Right lobe of liver (tissue), 6 donors: ENCODE measurements at regions of chr17 and their contacts with region 1.

Region 1: GRCh38 chr17:39147221-39148185 is 3.9 kb downstream of the PLXDC1 start:
- DNase-seq: no peak
- ATAC-seq: no peak
- H3K4me3 ChIP-seq: no peak overlapping the region
- H3K27ac ChIP-seq: no peak overlapping the region
- H3K4me1 ChIP-seq: peaks cover 0 to 6% (median 0%) of the 10 kb centered on the region in 4 donors
- H3K27me3 ChIP-seq: peaks cover 0 to 3% of the 10 kb centered on the region in 2 donors
- CTCF ChIP-seq: no peak
- POLR2A ChIP-seq: no peak

Region 2: GRCh38 chr17:39000021-39000601 is 147.4 kb before region 1 on chr17:
- intact Hi-C with region 1: no loop called
- DNase-seq: no peak
- ATAC-seq: no peak
- H3K4me3 ChIP-seq: no peak overlapping the region
- H3K27ac ChIP-seq: peak overlapping the region in 1 of 3 donors; percentile 26
- H3K4me1 ChIP-seq: no peaks in the 10 kb centered on the region
- H3K27me3 ChIP-seq: no peaks in the 10 kb centered on the region
- CTCF ChIP-seq: no peak
- POLR2A ChIP-seq: no peak

Region 3: GRCh38 chr17:39073916-39074315 is 73.6 kb before region 1 on chr17:
- intact Hi-C with region 1: loop called in 1 of 2 experiments (anchors 5 kb)
- DNase-seq: no peak
- ATAC-seq: no peak
- H3K4me3 ChIP-seq: no peak overlapping the region
- H3K27ac ChIP-seq: no peak overlapping the region
- H3K4me1 ChIP-seq: no peaks in the 10 kb centered on the region
- H3K27me3 ChIP-seq: no peaks in the 10 kb centered on the region
- CTCF ChIP-seq: no peak
- POLR2A ChIP-seq: no peak

Region 4: DNA sequence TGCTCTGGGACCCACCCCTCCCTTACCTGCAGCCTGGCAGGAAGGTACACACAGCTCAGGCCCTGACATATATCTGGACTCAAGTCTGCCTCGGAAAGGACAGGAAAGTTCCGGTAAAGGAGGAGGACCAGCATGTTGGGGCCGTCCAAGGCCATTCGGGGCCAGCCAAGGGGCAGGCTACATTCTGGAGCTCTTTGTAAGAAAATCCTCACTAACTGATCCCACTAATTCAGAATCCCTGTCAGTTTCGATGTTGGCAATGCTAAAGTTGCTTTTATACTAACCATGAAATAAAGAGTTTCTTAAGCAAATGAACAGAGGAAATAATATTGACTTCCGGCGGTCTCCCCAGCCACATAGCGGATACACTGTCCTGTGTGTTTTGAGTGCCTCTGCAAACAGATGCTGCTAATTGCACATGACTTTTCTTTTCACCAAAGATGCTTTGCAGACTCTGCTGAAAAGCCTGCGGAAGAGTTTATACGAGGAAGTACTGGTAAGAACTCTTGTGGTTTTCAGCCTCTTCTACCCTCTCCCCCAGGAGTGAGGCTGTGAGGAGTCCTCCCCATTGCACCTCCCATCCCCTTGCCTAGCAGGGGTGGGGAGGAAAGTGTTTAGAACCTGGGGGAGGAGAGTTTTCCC is 50.9 kb before region 1 on chr17:
- intact Hi-C with region 1: no loop called
- DNase-seq: no peak
- ATAC-seq: peak; percentile 25 to 57 (median 45)
- H3K4me3 ChIP-seq: no peak overlapping the region
- H3K27ac ChIP-seq: peak overlapping the region in 1 of 3 donors; percentile 43
- H3K4me1 ChIP-seq: no peaks in the 10 kb centered on the region
- H3K27me3 ChIP-seq: no peaks in the 10 kb centered on the region
- CTCF ChIP-seq: no peak
- POLR2A ChIP-seq: no peak